ENCODE measurements at regions of chr1 and their contacts with region 1.

Region 1: DNA sequence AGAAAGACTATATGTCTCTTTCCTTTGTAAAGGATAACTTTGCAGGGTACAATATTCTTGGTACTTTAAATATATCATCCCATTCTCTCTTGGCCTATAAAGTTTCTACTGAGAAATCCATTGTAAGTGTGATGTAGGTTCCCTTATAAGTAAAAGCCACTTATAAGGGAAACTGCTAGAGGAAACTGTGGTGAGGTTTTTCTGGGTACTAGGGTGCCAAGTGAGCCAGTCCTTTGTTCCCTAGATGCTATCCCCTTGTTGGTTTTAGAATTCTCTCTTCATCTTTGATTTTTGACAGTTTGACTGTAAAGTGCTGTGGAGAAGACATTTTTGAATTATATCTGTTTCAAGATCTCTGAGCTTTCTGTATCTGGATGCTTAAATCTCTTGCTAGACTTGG is 108.9 kb upstream of the NEK7 start:
- DNase-seq: peak; percentile 17
- H3K4me3 Mint-ChIP-seq: no peak overlapping the region
- H3K27ac Mint-ChIP-seq: peak overlapping the region; percentile 43
- H3K4me1 Mint-ChIP-seq: peaks cover 16% of the 10 kb centered on the region
- H3K27me3 Mint-ChIP-seq: peaks cover 3% of the 10 kb centered on the region

Region 2: GRCh38 chr1:197937892-197938291 is 110.0 kb before region 1 on chr1:
- intact Hi-C with region 1: no loop called
- DNase-seq: no peak
- H3K4me3 Mint-ChIP-seq: no peak overlapping the region
- H3K27ac Mint-ChIP-seq: no peak overlapping the region
- H3K4me1 Mint-ChIP-seq: peaks cover 7% of the 10 kb centered on the region
- H3K27me3 Mint-ChIP-seq: peaks cover 27% of the 10 kb centered on the region

Region 3: GRCh38 chr1:197948926-197949899 is 98.7 kb before region 1 on chr1:
- intact Hi-C with region 1: loop called (anchors 5 kb)
- DNase-seq: no peak
- H3K4me3 Mint-ChIP-seq: peak overlapping the region; percentile 4
- H3K27ac Mint-ChIP-seq: peak overlapping the region; percentile 83
- H3K4me1 Mint-ChIP-seq: peaks cover 40% of the 10 kb centered on the region
- H3K27me3 Mint-ChIP-seq: no peaks in the 10 kb centered on the region

Region 4: GRCh38 chr1:197984289-197984688 is 63.6 kb before region 1 on chr1:
- intact Hi-C with region 1: no loop called
- DNase-seq: no peak
- H3K4me3 Mint-ChIP-seq: no peak overlapping the region
- H3K27ac Mint-ChIP-seq: no peak overlapping the region
- H3K4me1 Mint-ChIP-seq: peaks cover 3% of the 10 kb centered on the region
- H3K27me3 Mint-ChIP-seq: peaks cover 29% of the 10 kb centered on the region

Region 5: GRCh38 chr1:198030682-198031081 is 17.2 kb before region 1 on chr1:
- intact Hi-C with region 1: no loop called
- DNase-seq: no peak
- H3K4me3 Mint-ChIP-seq: no peak overlapping the region
- H3K27ac Mint-ChIP-seq: no peak overlapping the region
- H3K4me1 Mint-ChIP-seq: peaks cover 10% of the 10 kb centered on the region
- H3K27me3 Mint-ChIP-seq: peaks cover 15% of the 10 kb centered on the region

Region 6: GRCh38 chr1:198079432-198079951 is 31.6 kb after region 1 on chr1:
- intact Hi-C with region 1: no loop called
- DNase-seq: no peak
- H3K4me3 Mint-ChIP-seq: no peak overlapping the region
- H3K27ac Mint-ChIP-seq: no peak overlapping the region
- H3K4me1 Mint-ChIP-seq: peaks cover 2% of the 10 kb centered on the region
- H3K27me3 Mint-ChIP-seq: peaks cover 12% of the 10 kb centered on the region

Measured in activated T-helper 2 cell treated with anti-CD3 and anti-CD28 coated beads, Interferon-gamma antibody, Interleukin-2, Interleukin-4, amounts not matched to agents 10 μg/mL and 5 μg/mL and 100 μg/mL, durations not matched to agents 14 hours and 24 hours and 36 hours (primary cell).